Activated T-helper 1 cell treated with anti-CD3 and anti-CD28 coated beads, Interleukin-12 subunit alpha, Interleukin-12 subunit beta, Interleukin-2, Interleukin-4 antibody, amounts not matched to agents 30 ng/mL and 10 ng/mL and 1 ng/mL, durations not matched to agents 14 hours and 24 hours and 36 hours (primary cell): ENCODE measurements at regions of chrX and their contacts with region 1.

Region 1: GRCh38 chrX:124300405-124300804 is 32.1 kb upstream of the TEX13D start:
- DNase-seq: no peak
- H3K4me3 Mint-ChIP-seq: peak overlapping the region; percentile 9
- H3K27ac Mint-ChIP-seq: peak overlapping the region; percentile 68
- H3K4me1 Mint-ChIP-seq: peaks cover 17% of the 10 kb centered on the region
- H3K27me3 Mint-ChIP-seq: no peaks in the 10 kb centered on the region

Region 2: GRCh38 chrX:124127496-124127895 is 172.9 kb before region 1 on chrX:
- intact Hi-C with region 1: no loop called
- DNase-seq: no peak
- H3K4me3 Mint-ChIP-seq: no peak overlapping the region
- H3K27ac Mint-ChIP-seq: no peak overlapping the region
- H3K4me1 Mint-ChIP-seq: no peaks in the 10 kb centered on the region
- H3K27me3 Mint-ChIP-seq: no peaks in the 10 kb centered on the region

Region 3: GRCh38 chrX:124280294-124280902 is 20.0 kb before region 1 on chrX:
- intact Hi-C with region 1: loop called (anchors 2 kb)
- DNase-seq: no peak
- H3K4me3 Mint-ChIP-seq: no peak overlapping the region
- H3K27ac Mint-ChIP-seq: peak overlapping the region; percentile 69
- H3K4me1 Mint-ChIP-seq: peaks cover 19% of the 10 kb centered on the region
- H3K27me3 Mint-ChIP-seq: no peaks in the 10 kb centered on the region

Region 4: GRCh38 chrX:124358800-124359383 is 58.5 kb after region 1 on chrX:
- intact Hi-C with region 1: loop called (anchors 2 kb)
- DNase-seq: no peak
- H3K4me3 Mint-ChIP-seq: peak overlapping the region; percentile 72
- H3K27ac Mint-ChIP-seq: peak overlapping the region; percentile 90
- H3K4me1 Mint-ChIP-seq: peaks cover 60% of the 10 kb centered on the region
- H3K27me3 Mint-ChIP-seq: no peaks in the 10 kb centered on the region

Region 5: GRCh38 chrX:124388562-124388961 is 88.2 kb after region 1 on chrX:
- intact Hi-C with region 1: no loop called
- DNase-seq: peak; percentile 23
- H3K4me3 Mint-ChIP-seq: no peak overlapping the region
- H3K27ac Mint-ChIP-seq: no peak overlapping the region
- H3K4me1 Mint-ChIP-seq: peaks cover 5% of the 10 kb centered on the region
- H3K27me3 Mint-ChIP-seq: no peaks in the 10 kb centered on the region